ENCODE measurements at regions of chr2 and their contacts with region 1.

Region 1: DNA sequence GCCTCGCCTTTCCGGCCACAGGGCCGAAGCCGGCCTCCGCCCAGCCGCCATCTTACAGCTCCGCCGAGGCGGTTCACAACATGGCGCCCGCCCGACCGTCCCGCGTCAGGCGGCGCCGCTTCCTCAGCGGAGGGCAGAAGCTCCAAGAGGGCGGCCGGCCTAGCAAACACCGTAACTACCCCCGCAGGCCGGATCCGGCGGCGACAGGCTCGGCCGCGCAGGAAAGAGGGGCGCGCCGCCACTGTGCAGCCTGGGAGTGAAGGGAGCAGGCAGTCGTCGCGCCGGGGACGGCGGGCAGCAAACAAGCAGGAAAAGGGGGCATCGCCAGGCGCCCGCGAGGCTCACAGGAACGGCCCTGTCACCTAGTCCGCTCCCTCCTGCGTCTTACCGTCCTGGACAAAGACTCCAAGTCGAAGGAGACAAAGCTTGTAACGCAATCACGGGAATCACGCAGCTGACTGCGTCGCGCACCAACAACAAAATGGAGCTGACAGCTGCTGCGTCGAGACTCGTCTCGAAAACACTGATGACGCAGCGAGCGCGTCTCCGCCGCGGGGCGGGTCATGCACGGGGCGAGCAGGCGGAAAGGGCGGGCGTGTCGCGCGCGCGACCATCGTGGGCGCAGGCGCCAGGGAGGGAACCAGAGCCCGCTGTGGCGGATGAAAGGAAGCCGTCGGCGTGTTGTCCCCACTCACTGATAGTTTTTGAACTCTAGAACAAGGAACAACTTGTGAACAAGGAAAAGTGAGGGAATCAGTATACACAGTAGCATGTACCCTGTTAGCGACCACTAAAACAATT is at the start of gene CLK1:
- DNase-seq: peak; percentile 93 to 97 (median 94)
- H3K4me3 ChIP-seq: peak within 1 kb of the TSS; percentile 83 to 100
- H3K4me3 Mint-ChIP-seq: peak within 1 kb of the TSS; percentile 91 to 99 (median 96)
- H3K27ac ChIP-seq: peak within 1 kb of the TSS; percentile 100
- H3K27ac Mint-ChIP-seq: peak within 1 kb of the TSS; percentile 89 to 100 (median 100)
- H3K4me1 ChIP-seq: peaks cover 47% of the 10 kb centered on the region
- H3K4me1 Mint-ChIP-seq: peaks cover 28 to 59% (median 41%) of the 10 kb centered on the region in 4 donors
- H3K27me3 ChIP-seq: no peaks in the 10 kb centered on the region
- H3K27me3 Mint-ChIP-seq: no peaks in the 10 kb centered on the region
- total RNA-seq, gene CLK1: 472 to 499 TPM

Region 2: DNA sequence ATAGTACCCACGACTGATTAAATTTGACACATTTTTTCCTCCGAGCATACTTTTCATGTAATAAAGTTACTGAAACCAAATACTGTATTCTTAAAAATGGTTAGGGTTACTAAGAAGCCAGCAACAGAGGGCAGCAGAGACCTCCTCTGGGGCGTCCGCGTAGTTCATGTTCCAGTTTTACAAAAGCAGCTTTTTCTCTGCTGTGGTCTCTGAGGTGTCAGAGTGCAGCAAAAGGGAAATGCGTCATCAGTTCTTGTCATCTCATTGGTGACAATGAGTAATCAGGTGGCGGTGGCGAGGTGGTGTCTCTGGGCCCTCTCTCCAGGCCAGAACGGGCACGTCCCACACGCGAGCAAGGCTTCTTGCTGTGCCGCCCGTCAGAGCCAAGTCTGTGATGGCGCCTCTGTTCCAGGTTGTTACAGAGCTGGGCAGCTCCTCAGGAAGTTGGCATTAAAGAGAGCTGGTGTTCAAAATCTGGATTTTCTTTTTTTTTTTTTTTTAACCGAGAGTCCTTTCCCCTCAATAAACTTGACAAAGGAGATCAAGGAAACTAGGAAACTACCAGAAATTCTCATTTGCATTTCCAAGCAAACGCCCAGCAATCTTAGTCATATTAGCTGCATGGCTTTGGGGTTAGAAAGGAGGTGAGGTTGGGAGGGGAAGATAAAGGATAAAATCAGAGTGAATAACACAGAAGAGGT is 151.2 kb before region 1 on chr2:
- CTCF ChIA-PET with region 1: interaction called, 10 read pairs
- POLR2A ChIA-PET with region 1: interaction called, 57 read pairs
- intact Hi-C with region 1: loop called (anchors 1 kb)
- DNase-seq: peak; percentile 92 to 98 (median 95)
- H3K4me3 ChIP-seq: peak overlapping the region in 1 of 2 donors; percentile 35
- H3K4me3 Mint-ChIP-seq: peak overlapping the region; percentile 78 to 86 (median 84)
- H3K27ac ChIP-seq: peak overlapping the region; percentile 78
- H3K27ac Mint-ChIP-seq: peak overlapping the region; percentile 98 to 99 (median 98)
- H3K4me1 ChIP-seq: peaks cover 14% of the 10 kb centered on the region
- H3K4me1 Mint-ChIP-seq: peaks cover 8 to 13% (median 11%) of the 10 kb centered on the region in 4 donors
- H3K27me3 ChIP-seq: no peaks in the 10 kb centered on the region
- H3K27me3 Mint-ChIP-seq: no peaks in the 10 kb centered on the region

Region 3: GRCh38 chr2:200877443-200877842 is 13.1 kb after region 1 on chr2:
- CTCF ChIA-PET with region 1: interaction called, 5 read pairs
- POLR2A ChIA-PET with region 1: interaction called, 32 read pairs
- intact Hi-C with region 1: no loop called
- DNase-seq: no peak
- H3K4me3 ChIP-seq: no peak overlapping the region
- H3K4me3 Mint-ChIP-seq: no peak overlapping the region
- H3K27ac ChIP-seq: no peak overlapping the region
- H3K27ac Mint-ChIP-seq: peak overlapping the region in 1 of 7 donors; percentile 19
- H3K4me1 ChIP-seq: no peaks in the 10 kb centered on the region
- H3K4me1 Mint-ChIP-seq: peaks cover 0 to 5% (median 2%) of the 10 kb centered on the region in 4 donors
- H3K27me3 ChIP-seq: no peaks in the 10 kb centered on the region
- H3K27me3 Mint-ChIP-seq: no peaks in the 10 kb centered on the region

Region 4: DNA sequence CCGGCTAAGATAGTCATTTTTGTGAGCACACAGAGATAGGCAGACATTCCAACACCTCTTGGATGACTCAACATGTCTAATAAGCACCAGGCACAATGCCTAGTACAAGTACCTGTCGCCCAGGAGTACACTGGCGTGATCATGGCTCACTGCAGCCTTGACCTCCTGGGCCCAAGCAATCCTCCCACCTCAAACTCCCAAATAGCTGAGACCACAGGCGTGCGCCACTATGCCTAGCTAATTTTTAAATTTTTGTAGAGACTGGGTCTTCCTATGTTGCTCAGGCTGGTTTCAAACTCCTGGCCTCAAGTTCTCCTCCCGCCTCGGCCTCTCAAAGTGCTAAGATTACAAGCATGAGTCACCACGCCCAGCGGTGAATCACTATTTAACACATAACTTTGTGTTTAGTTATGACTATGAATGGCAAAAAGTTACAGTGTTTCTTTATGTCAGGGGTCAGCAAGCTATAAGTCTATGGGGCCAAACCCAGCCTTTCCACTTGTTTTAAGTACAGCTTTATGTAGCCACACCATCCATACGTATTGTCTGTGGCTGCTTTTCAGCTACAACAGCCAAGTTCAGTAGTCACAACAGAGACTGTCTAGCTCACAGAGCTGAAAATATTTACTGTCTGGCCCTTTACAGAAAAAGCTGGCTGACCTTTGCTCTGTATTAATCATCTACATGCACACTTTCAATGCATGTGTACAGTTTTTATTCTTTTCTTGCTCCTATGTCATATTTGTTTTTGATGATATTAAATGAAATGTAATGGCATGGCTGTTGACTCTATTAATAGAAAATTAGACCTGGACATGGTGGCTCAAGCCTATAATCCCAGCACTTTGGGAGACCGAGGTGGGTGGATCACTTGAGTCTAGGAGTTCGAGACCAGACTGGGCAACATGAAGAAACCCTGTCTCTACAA is 80.4 kb after region 1 on chr2:
- CTCF ChIA-PET with region 1: no interaction called
- POLR2A ChIA-PET with region 1: no interaction called
- intact Hi-C with region 1: no loop called
- DNase-seq: no peak
- H3K4me3 ChIP-seq: no peak overlapping the region
- H3K4me3 Mint-ChIP-seq: no peak overlapping the region
- H3K27ac ChIP-seq: no peak overlapping the region
- H3K27ac Mint-ChIP-seq: peak overlapping the region in 5 of 7 donors; percentile 9 to 80 (median 47)
- H3K4me1 ChIP-seq: no peaks in the 10 kb centered on the region
- H3K4me1 Mint-ChIP-seq: peaks cover 0 to 9% (median 4%) of the 10 kb centered on the region in 4 donors
- H3K27me3 ChIP-seq: no peaks in the 10 kb centered on the region
- H3K27me3 Mint-ChIP-seq: no peaks in the 10 kb centered on the region

Region 5: GRCh38 chr2:200963124-200963917 is 98.9 kb after region 1 on chr2 and contains the start of gene ORC2:
- CTCF ChIA-PET with region 1: no interaction called
- POLR2A ChIA-PET with region 1: interaction called, 21 read pairs
- intact Hi-C with region 1: loop called (anchors 1 kb)
- DNase-seq: peak; percentile 93 to 97 (median 94)
- H3K4me3 ChIP-seq: peak within 1 kb of the TSS; percentile 87 to 95
- H3K4me3 Mint-ChIP-seq: peak within 1 kb of the TSS; percentile 96 to 99 (median 98)
- H3K27ac ChIP-seq: peak within 1 kb of the TSS; percentile 79
- H3K27ac Mint-ChIP-seq: peak within 1 kb of the TSS; percentile 98 to 100 (median 99)
- H3K4me1 ChIP-seq: peaks cover 47% of the 10 kb centered on the region
- H3K4me1 Mint-ChIP-seq: peaks cover 35 to 73% (median 56%) of the 10 kb centered on the region in 4 donors
- H3K27me3 ChIP-seq: no peaks in the 10 kb centered on the region
- H3K27me3 Mint-ChIP-seq: no peaks in the 10 kb centered on the region
- total RNA-seq, gene ORC2: 72.2 to 76.4 TPM

Region 6: GRCh38 chr2:201057087-201057521 is 192.7 kb after region 1 on chr2:
- CTCF ChIA-PET with region 1: no interaction called
- POLR2A ChIA-PET with region 1: no interaction called
- intact Hi-C with region 1: no loop called
- DNase-seq: no peak
- H3K4me3 ChIP-seq: no peak overlapping the region
- H3K4me3 Mint-ChIP-seq: no peak overlapping the region
- H3K27ac ChIP-seq: no peak overlapping the region
- H3K27ac Mint-ChIP-seq: peak overlapping the region in 4 of 7 donors; percentile 36 to 58 (median 44)
- H3K4me1 ChIP-seq: peaks cover 16% of the 10 kb centered on the region
- H3K4me1 Mint-ChIP-seq: peaks cover 19 to 50% (median 37%) of the 10 kb centered on the region in 4 donors
- H3K27me3 ChIP-seq: no peaks in the 10 kb centered on the region
- H3K27me3 Mint-ChIP-seq: no peaks in the 10 kb centered on the region

Region 7: GRCh38 chr2:201182650-201183364 is 318.4 kb after region 1 on chr2 and contains the start of gene CASP10:
- CTCF ChIA-PET with region 1: no interaction called
- POLR2A ChIA-PET with region 1: interaction called, 11 read pairs
- intact Hi-C with region 1: no loop called
- DNase-seq: peak; percentile 62 to 81 (median 76)
- H3K4me3 ChIP-seq: peak within 1 kb of the TSS; percentile 54 to 87
- H3K4me3 Mint-ChIP-seq: peak within 1 kb of the TSS; percentile 90 to 99 (median 96)
- H3K27ac ChIP-seq: peak within 1 kb of the TSS; percentile 75
- H3K27ac Mint-ChIP-seq: peak within 1 kb of the TSS; percentile 92 to 98 (median 96)
- H3K4me1 ChIP-seq: peaks cover 37% of the 10 kb centered on the region
- H3K4me1 Mint-ChIP-seq: peaks cover 28 to 54% (median 40%) of the 10 kb centered on the region in 4 donors
- H3K27me3 ChIP-seq: no peaks in the 10 kb centered on the region
- H3K27me3 Mint-ChIP-seq: no peaks in the 10 kb centered on the region
- total RNA-seq, gene CASP10: 30.6 to 36.6 TPM

Region 8: GRCh38 chr2:202265467-202266277 is 1401.3 kb after region 1 on chr2 and contains the start of gene NOP58:
- CTCF ChIA-PET with region 1: no interaction called
- POLR2A ChIA-PET with region 1: no interaction called
- intact Hi-C with region 1: loop called (anchors 1 kb)
- DNase-seq: peak; percentile 91 to 96 (median 94)
- H3K4me3 ChIP-seq: peak within 1 kb of the TSS; percentile 92 to 97
- H3K4me3 Mint-ChIP-seq: peak within 1 kb of the TSS in 6 of 8 donors; percentile 55 to 79 (median 67)
- H3K27ac ChIP-seq: peak within 1 kb of the TSS; percentile 99
- H3K27ac Mint-ChIP-seq: peak within 1 kb of the TSS in 5 of 7 donors; percentile 48 to 91 (median 72)
- H3K4me1 ChIP-seq: peaks cover 39% of the 10 kb centered on the region
- H3K4me1 Mint-ChIP-seq: peaks cover 9 to 35% (median 16%) of the 10 kb centered on the region in 4 donors
- H3K27me3 ChIP-seq: no peaks in the 10 kb centered on the region
- H3K27me3 Mint-ChIP-seq: no peaks in the 10 kb centered on the region
- total RNA-seq, gene NOP58: 114 to 123 TPM

Measured in CD4-positive, alpha-beta memory T cell (primary cell).